SK-N-SH (cell line): ENCODE measurements at regions of chr10 and their contacts with region 1.

Region 1: GRCh38 chr10:42970451-42971250 is 106.2 kb upstream of the RET start:
- DNase-seq: peak; percentile 90
- H3K4me3 ChIP-seq: no peak overlapping the region
- H3K27ac ChIP-seq: peak overlapping the region; percentile 20 to 100; a peak in 3 of 4 replicates
- H3K4me1 ChIP-seq: peaks cover 0 to 59% of the 10 kb centered on the region in 2 experiments; a peak in 2 of 4 replicates
- H3K27me3 ChIP-seq: no peaks in the 10 kb centered on the region
- CTCF ChIP-seq: no peak
- EP300 ChIP-seq: peak; percentile 35 to 100; a peak in 3 of 4 replicates
- RAD21 ChIP-seq: peak; percentile 44; the same call in 1 of the 2 replicates

Region 2: DNA sequence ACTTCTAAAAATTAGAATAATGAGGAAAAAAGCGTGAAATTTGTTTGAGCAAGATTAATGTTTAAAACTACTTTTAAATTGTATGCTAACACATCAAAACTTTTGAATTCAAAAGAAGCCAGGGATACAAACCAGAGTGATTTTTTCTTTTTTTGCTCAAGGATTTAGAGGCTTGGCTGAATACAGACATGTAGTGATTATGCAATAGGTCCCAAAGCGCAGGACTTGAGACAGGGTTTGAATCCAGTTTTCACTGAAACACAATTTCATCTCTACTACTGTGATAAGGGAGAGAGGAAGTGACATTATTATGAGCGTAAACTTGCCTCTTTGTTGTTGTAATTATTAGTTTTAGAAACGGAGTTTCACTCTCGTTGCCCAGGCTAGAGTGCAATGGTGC is 539.6 kb before region 1 on chr10:
- CTCF ChIA-PET with region 1: no interaction called
- POLR2A ChIA-PET with region 1: no interaction called
- DNase-seq: no peak
- H3K4me3 ChIP-seq: no peak overlapping the region
- H3K27ac ChIP-seq: no peak overlapping the region
- H3K4me1 ChIP-seq: no peaks in the 10 kb centered on the region
- H3K27me3 ChIP-seq: no peaks in the 10 kb centered on the region
- CTCF ChIP-seq: no peak
- EP300 ChIP-seq: no peak
- RAD21 ChIP-seq: no peak

Region 3: DNA sequence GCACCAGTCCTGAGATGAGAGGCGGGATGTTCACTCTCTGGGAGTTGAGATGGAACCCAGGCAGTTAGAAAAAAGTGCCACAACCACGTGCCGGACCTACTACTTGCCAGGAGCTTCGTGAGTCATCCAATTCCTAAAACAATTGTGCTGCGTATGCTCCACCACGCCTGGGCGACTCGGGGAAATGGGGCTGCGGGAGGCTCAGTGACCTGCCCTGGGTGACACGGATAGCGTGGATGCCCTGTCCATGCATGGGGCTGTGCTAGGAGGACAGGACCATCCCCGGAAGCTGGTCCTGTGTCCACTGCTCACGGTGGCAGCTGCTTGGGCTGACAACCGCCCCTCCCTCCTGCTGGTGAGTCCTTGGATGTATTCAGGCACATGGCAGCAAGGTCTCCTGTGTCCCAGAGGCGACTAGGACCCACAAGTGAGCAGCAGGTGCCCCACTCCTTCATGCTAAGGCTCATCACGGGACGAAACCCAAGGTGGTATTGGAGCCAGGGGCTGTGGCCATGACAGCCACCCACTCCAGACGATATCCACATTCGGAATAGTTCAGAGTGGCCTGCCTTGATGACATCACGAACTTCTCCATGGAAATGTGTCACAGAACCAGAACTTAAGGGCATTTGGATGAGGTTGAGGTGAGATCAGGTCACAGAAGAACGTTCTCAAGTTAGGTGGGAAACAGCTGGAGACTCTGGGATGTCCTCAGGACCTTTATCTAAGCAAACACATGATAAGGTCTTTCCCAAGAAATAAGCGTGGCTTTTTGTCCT is 97.6 kb before region 1 on chr10:
- CTCF ChIA-PET with region 1: interaction called, 20 read pairs
- POLR2A ChIA-PET with region 1: interaction called, 28 read pairs
- DNase-seq: no peak
- H3K4me3 ChIP-seq: no peak overlapping the region
- H3K27ac ChIP-seq: peak overlapping the region in 1 of 2 experiments; percentile 99; a peak in 2 of 4 replicates
- H3K4me1 ChIP-seq: peaks cover 0 to 90% of the 10 kb centered on the region in 2 experiments; a peak in 2 of 4 replicates
- H3K27me3 ChIP-seq: no peaks in the 10 kb centered on the region
- CTCF ChIP-seq: no peak
- EP300 ChIP-seq: no peak
- RAD21 ChIP-seq: no peak

Region 4: DNA sequence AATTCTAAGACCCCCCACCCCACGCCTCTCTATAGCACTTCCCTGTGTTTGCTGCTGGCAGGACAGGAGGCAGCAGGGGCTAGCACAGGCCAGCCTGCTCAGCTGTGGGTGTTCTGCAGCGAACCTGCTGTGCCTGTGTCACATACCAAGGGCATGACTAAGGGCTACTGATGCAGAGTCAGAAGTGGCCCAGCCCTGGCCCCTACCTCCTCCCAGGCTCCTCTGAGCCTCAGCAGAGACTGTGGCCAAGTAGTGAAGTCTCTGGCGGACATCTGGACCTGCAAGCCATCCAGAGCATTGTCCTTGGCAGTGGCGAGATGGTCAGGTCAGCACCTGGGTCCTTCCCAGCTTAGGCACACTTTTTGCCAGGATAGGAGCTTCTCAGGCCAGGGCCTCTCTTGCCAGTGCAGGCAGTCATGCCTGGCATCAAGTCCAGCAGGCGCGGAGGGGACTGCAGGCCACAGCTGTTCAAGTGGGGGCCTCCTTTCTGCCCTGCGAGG is 10.1 kb before region 1 on chr10:
- CTCF ChIA-PET with region 1: interaction called, 7 read pairs
- POLR2A ChIA-PET with region 1: interaction called, 15 read pairs
- DNase-seq: no peak
- H3K4me3 ChIP-seq: no peak overlapping the region
- H3K27ac ChIP-seq: peak overlapping the region in 1 of 2 experiments; percentile 93; a peak in 1 of 4 replicates
- H3K4me1 ChIP-seq: peaks cover 0 to 43% of the 10 kb centered on the region in 2 experiments; a peak in 2 of 4 replicates
- H3K27me3 ChIP-seq: no peaks in the 10 kb centered on the region
- CTCF ChIP-seq: no peak
- EP300 ChIP-seq: no peak
- RAD21 ChIP-seq: no peak

Region 5: GRCh38 chr10:43027331-43027955 is 56.8 kb after region 1 on chr10:
- CTCF ChIA-PET with region 1: no interaction called
- POLR2A ChIA-PET with region 1: no interaction called
- DNase-seq: peak; percentile 23
- H3K4me3 ChIP-seq: no peak overlapping the region
- H3K27ac ChIP-seq: no peak overlapping the region
- H3K4me1 ChIP-seq: peaks cover 0 to 31% of the 10 kb centered on the region in 2 experiments; a peak in 1 of 4 replicates
- H3K27me3 ChIP-seq: no peaks in the 10 kb centered on the region
- CTCF ChIP-seq: no peak
- EP300 ChIP-seq: no peak
- RAD21 ChIP-seq: no peak

Region 6: DNA sequence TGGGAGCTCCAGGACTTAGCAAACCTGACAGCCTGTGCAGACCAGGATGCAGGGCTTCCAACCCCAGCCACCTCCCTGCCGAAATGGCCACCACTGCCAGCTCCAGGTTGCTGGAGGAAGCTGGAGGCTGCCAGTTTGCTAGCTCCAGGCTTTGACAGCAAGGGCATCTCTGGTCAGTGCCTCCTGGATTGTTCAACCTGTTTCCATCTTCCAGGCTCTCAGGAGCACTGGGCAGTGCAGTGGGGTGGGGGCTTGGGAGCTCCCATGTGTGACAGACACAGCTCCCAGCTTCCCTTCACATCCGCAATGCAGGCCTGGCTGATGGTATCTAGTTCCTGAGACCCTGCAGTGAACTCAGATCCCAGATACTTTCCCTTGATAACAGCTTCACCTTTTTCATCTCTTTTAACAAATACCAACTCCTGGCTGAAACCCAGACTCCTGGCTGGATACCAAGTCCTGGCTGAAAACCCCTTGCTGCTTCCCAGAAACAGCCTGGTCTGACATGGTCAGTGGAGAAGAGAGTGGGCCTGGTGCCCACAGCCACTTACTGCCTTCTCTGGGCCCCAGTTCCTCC is 85.4 kb after region 1 on chr10:
- CTCF ChIA-PET with region 1: interaction called, 6 read pairs
- POLR2A ChIA-PET with region 1: interaction called, 50 read pairs
- DNase-seq: peak; percentile 87
- H3K4me3 ChIP-seq: no peak overlapping the region
- H3K27ac ChIP-seq: peak overlapping the region in 1 of 2 experiments; percentile 100; a peak in 2 of 4 replicates
- H3K4me1 ChIP-seq: peaks cover 0 to 77% of the 10 kb centered on the region in 2 experiments; a peak in 2 of 4 replicates
- H3K27me3 ChIP-seq: no peaks in the 10 kb centered on the region
- CTCF ChIP-seq: no peak
- EP300 ChIP-seq: peak in 1 of 2 experiments; percentile 100; a peak in 2 of 4 replicates
- RAD21 ChIP-seq: peak; percentile 35

Region 7: GRCh38 chr10:43102063-43102828 is 131.6 kb after region 1 on chr10:
- CTCF ChIA-PET with region 1: no interaction called
- POLR2A ChIA-PET with region 1: no interaction called
- DNase-seq: no peak
- H3K4me3 ChIP-seq: no peak overlapping the region
- H3K27ac ChIP-seq: peak overlapping the region in 1 of 2 experiments; percentile 8; a peak in 1 of 4 replicates
- H3K4me1 ChIP-seq: peaks cover 0 to 67% of the 10 kb centered on the region in 2 experiments; a peak in 2 of 4 replicates
- H3K27me3 ChIP-seq: no peaks in the 10 kb centered on the region
- CTCF ChIP-seq: no peak
- EP300 ChIP-seq: no peak
- RAD21 ChIP-seq: no peak